ENCODE measurements at regions of chr12 and their contacts with region 1.

Region 1: GRCh38 chr12:47837190-47838171 is 17.8 kb upstream of the HDAC7 start:
- DNase-seq: peak; percentile 70 to 86
- H3K4me3 ChIP-seq: no peak overlapping the region
- H3K4me3 Mint-ChIP-seq: no peak overlapping the region
- H3K27ac Mint-ChIP-seq: no peak overlapping the region
- H3K4me1 ChIP-seq: peaks cover 5% of the 10 kb centered on the region; the same call in 1 of the 2 replicates
- H3K4me1 Mint-ChIP-seq: peaks cover 14% of the 10 kb centered on the region
- H3K27me3 ChIP-seq: no peaks in the 10 kb centered on the region
- H3K27me3 Mint-ChIP-seq: no peaks in the 10 kb centered on the region
- CTCF ChIP-seq: peak; percentile 93 to 96

Region 2: DNA sequence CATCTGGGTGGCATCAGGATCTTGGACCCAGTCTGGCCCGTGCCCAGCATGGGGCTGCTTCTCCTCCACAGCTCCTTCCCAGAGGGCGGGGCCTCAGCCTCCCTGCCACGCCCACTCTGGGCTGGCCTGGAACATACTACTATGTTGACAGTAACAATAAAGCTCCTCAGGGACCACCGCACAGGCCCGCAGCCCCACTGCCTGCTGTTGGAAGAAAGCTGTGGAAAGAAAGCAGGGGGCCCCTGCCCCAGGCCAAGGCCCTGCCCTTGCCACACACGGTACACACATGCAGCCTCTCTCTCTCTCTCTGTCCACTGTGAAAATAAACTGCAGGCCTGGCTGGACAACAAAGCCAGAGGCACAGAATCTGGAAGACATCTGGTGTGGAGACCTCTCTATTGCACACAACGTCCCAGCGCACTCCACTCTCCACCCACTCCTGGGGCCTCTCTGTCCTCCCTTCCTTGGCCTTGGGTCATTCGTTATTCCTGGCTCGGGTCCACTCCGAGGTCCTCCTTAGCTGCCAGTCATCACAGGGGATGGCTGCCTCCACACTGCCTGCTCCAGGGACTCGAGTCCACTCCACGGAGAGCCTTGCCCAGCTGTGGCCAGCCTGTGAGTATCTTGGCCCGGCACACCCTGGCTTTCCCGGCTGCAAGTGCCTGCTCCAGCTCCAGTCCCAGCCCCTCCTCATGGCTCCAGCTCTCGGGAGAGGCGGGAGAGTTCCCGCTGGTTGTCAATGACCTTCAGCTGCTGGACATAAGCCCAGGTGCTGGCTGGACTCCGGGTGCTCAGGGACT is 100.4 kb before region 1 on chr12:
- CTCF ChIA-PET with region 1: interaction called, 65 read pairs
- POLR2A ChIA-PET with region 1: no interaction called
- intact Hi-C with region 1: no loop called
- DNase-seq: no peak
- H3K4me3 ChIP-seq: no peak overlapping the region
- H3K4me3 Mint-ChIP-seq: no peak overlapping the region
- H3K27ac Mint-ChIP-seq: no peak overlapping the region
- H3K4me1 ChIP-seq: no peaks in the 10 kb centered on the region
- H3K4me1 Mint-ChIP-seq: no peaks in the 10 kb centered on the region
- H3K27me3 ChIP-seq: no peaks in the 10 kb centered on the region
- H3K27me3 Mint-ChIP-seq: no peaks in the 10 kb centered on the region
- CTCF ChIP-seq: no peak

Region 3: GRCh38 chr12:47767216-47767724 is 70.2 kb before region 1 on chr12:
- CTCF ChIA-PET with region 1: interaction called, 19 read pairs
- POLR2A ChIA-PET with region 1: no interaction called
- intact Hi-C with region 1: no loop called
- DNase-seq: peak; percentile 68 to 75
- H3K4me3 ChIP-seq: no peak overlapping the region
- H3K4me3 Mint-ChIP-seq: no peak overlapping the region
- H3K27ac Mint-ChIP-seq: peak overlapping the region; percentile 65
- H3K4me1 ChIP-seq: peaks cover 34% of the 10 kb centered on the region
- H3K4me1 Mint-ChIP-seq: peaks cover 2% of the 10 kb centered on the region
- H3K27me3 ChIP-seq: no peaks in the 10 kb centered on the region
- H3K27me3 Mint-ChIP-seq: no peaks in the 10 kb centered on the region
- CTCF ChIP-seq: peak; percentile 50 to 75

Region 4: GRCh38 chr12:47789712-47790489 is 47.6 kb before region 1 on chr12:
- CTCF ChIA-PET with region 1: interaction called, 101 read pairs
- POLR2A ChIA-PET with region 1: no interaction called
- intact Hi-C with region 1: no loop called
- DNase-seq: no peak
- H3K4me3 ChIP-seq: no peak overlapping the region
- H3K4me3 Mint-ChIP-seq: no peak overlapping the region
- H3K27ac Mint-ChIP-seq: no peak overlapping the region
- H3K4me1 ChIP-seq: no peaks in the 10 kb centered on the region
- H3K4me1 Mint-ChIP-seq: no peaks in the 10 kb centered on the region
- H3K27me3 ChIP-seq: no peaks in the 10 kb centered on the region
- H3K27me3 Mint-ChIP-seq: no peaks in the 10 kb centered on the region
- CTCF ChIP-seq: no peak

Region 5: GRCh38 chr12:47812797-47813510 is 24.5 kb before region 1 on chr12:
- CTCF ChIA-PET with region 1: interaction called, 113 read pairs
- POLR2A ChIA-PET with region 1: no interaction called
- intact Hi-C with region 1: no loop called
- DNase-seq: peak; percentile 34 to 48
- H3K4me3 ChIP-seq: 0 out of 2 replicates have a peak overlapping the region, but pooled peaks have one; percentile 1
- H3K4me3 Mint-ChIP-seq: peak overlapping the region; percentile 11
- H3K27ac Mint-ChIP-seq: peak overlapping the region; percentile 20
- H3K4me1 ChIP-seq: peaks cover 24% of the 10 kb centered on the region
- H3K4me1 Mint-ChIP-seq: peaks cover 18% of the 10 kb centered on the region
- H3K27me3 ChIP-seq: no peaks in the 10 kb centered on the region
- H3K27me3 Mint-ChIP-seq: no peaks in the 10 kb centered on the region
- CTCF ChIP-seq: no peak

Region 6: DNA sequence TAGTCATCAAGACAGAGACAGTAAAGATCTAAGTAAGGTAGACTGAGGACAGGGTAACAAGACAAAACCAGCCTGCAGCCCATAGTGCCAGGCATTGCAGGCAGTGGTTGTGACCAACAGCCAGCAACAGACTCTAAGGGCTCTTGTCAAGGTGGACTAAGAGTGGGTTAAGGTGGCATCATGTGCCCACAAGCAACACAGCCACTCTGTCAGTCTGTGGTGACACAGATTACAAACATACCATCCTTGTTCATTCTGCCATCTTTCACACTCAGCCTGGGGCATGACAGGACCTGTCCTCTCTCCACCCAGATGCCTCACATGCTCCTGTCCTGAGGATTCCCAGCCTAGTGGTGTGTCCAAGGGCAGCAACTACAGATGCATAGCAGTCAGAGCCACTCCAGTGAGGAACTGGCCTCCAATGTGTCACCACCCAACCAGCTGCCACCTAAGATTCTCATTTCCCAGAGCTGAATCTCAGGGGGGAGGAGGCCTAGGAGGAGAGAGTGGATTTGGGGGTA is 39.0 kb after region 1 on chr12:
- CTCF ChIA-PET with region 1: no interaction called
- POLR2A ChIA-PET with region 1: no interaction called
- intact Hi-C with region 1: no loop called
- DNase-seq: no peak
- H3K4me3 ChIP-seq: no peak overlapping the region
- H3K4me3 Mint-ChIP-seq: no peak overlapping the region
- H3K27ac Mint-ChIP-seq: no peak overlapping the region
- H3K4me1 ChIP-seq: no peaks in the 10 kb centered on the region
- H3K4me1 Mint-ChIP-seq: peaks cover 5% of the 10 kb centered on the region
- H3K27me3 ChIP-seq: no peaks in the 10 kb centered on the region
- H3K27me3 Mint-ChIP-seq: no peaks in the 10 kb centered on the region
- CTCF ChIP-seq: no peak

Region 7: GRCh38 chr12:47949441-47950308 is 112.2 kb after region 1 on chr12:
- CTCF ChIA-PET with region 1: interaction called, 12 read pairs
- POLR2A ChIA-PET with region 1: no interaction called
- intact Hi-C with region 1: no loop called
- DNase-seq: peak; percentile 86 to 94
- H3K4me3 ChIP-seq: no peak overlapping the region
- H3K4me3 Mint-ChIP-seq: no peak overlapping the region
- H3K27ac Mint-ChIP-seq: no peak overlapping the region
- H3K4me1 ChIP-seq: peaks cover 24% of the 10 kb centered on the region
- H3K4me1 Mint-ChIP-seq: peaks cover 40% of the 10 kb centered on the region
- H3K27me3 ChIP-seq: no peaks in the 10 kb centered on the region
- H3K27me3 Mint-ChIP-seq: no peaks in the 10 kb centered on the region
- CTCF ChIP-seq: peak; percentile 94 to 97

Measured in Caco-2 (cell line).